ENCODE measurements at regions of chr7 and their contacts with region 1.

Region 1: GRCh38 chr7:50793115-50793946 is 10.6 kb upstream of the GRB10 start:
- DNase-seq: peak; percentile 88

Region 2: GRCh38 chr7:50359995-50360925 is 433.1 kb before region 1 on chr7:
- intact Hi-C with region 1: no loop called
- DNase-seq: no peak

Region 3: GRCh38 chr7:50761713-50762112 is 31.6 kb before region 1 on chr7:
- intact Hi-C with region 1: no loop called
- DNase-seq: no peak

Region 4: GRCh38 chr7:51067757-51068156 is 274.4 kb after region 1 on chr7:
- intact Hi-C with region 1: loop called in 1 of 2 experiments (anchors 10 kb)
- DNase-seq: no peak